ENCODE measurements at regions of chrX and their contacts with region 1.

Region 1: DNA sequence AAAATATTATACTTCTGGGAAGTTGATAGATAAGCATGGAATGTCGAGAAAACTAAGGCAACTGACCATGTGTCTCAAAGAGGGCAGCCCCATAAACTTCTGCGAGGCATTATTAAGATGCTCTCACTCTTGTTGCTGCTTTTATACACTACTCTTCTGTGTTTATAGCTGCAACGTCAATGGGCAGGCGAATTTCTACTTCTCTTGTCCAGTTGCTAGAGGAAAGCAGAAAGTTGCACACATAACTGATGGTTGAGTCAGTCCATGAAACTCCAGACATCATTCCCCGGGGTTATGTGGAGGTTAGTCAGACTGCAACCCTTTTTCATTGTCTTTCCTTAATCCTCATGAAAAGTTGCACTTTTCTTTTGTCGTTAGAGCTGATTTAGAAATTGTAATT is 39.8 kb downstream of the VCX3B start:
- DNase-seq: peak; percentile 13
- ATAC-seq: no peak
- H3K4me3 ChIP-seq: no peak overlapping the region
- H3K27ac ChIP-seq: no peak overlapping the region
- H3K4me1 ChIP-seq: no peaks in the 10 kb centered on the region
- H3K27me3 ChIP-seq: no peaks in the 10 kb centered on the region
- CTCF ChIP-seq: no peak
- POLR2A ChIP-seq: no peak
- RAD21 ChIP-seq: no peak

Region 2: GRCh38 chrX:7552758-7553157 is 951.7 kb before region 1 on chrX:
- CTCF ChIA-PET with region 1: no interaction called
- POLR2A ChIA-PET with region 1: no interaction called
- dilution Hi-C with region 1: no loop called
- in situ Hi-C with region 1: no loop called
- intact Hi-C with region 1: no loop called
- DNase-seq: no peak
- ATAC-seq: no peak
- H3K4me3 ChIP-seq: no peak overlapping the region
- H3K27ac ChIP-seq: no peak overlapping the region
- H3K4me1 ChIP-seq: no peaks in the 10 kb centered on the region
- H3K27me3 ChIP-seq: no peaks in the 10 kb centered on the region
- CTCF ChIP-seq: no peak
- POLR2A ChIP-seq: no peak
- RAD21 ChIP-seq: no peak

Region 3: GRCh38 chrX:8289523-8289922 is 214.9 kb before region 1 on chrX:
- CTCF ChIA-PET with region 1: no interaction called
- POLR2A ChIA-PET with region 1: no interaction called
- dilution Hi-C with region 1: no loop called
- in situ Hi-C with region 1: no loop called
- intact Hi-C with region 1: no loop called
- DNase-seq: no peak
- ATAC-seq: no peak
- H3K4me3 ChIP-seq: no peak overlapping the region
- H3K27ac ChIP-seq: no peak overlapping the region
- H3K4me1 ChIP-seq: no peaks in the 10 kb centered on the region
- H3K27me3 ChIP-seq: no peaks in the 10 kb centered on the region
- CTCF ChIP-seq: no peak
- POLR2A ChIP-seq: no peak
- RAD21 ChIP-seq: no peak

Region 4: GRCh38 chrX:8484360-8484949 is 20.0 kb before region 1 on chrX:
- CTCF ChIA-PET with region 1: no interaction called
- POLR2A ChIA-PET with region 1: no interaction called
- dilution Hi-C with region 1: no loop called
- in situ Hi-C with region 1: no loop called
- intact Hi-C with region 1: loop called (anchors 1 kb)
- DNase-seq: no peak
- ATAC-seq: no peak
- H3K4me3 ChIP-seq: no peak overlapping the region
- H3K27ac ChIP-seq: no peak overlapping the region
- H3K4me1 ChIP-seq: no peaks in the 10 kb centered on the region
- H3K27me3 ChIP-seq: no peaks in the 10 kb centered on the region
- CTCF ChIP-seq: no peak
- POLR2A ChIP-seq: no peak
- RAD21 ChIP-seq: no peak